Activated T-helper 1 cell treated with anti-CD3 and anti-CD28 coated beads, Interleukin-12 subunit alpha, Interleukin-12 subunit beta, Interleukin-2, Interleukin-4 antibody, amounts not matched to agents 30 ng/mL and 10 ng/mL and 1 ng/mL, durations not matched to agents 14 hours and 24 hours and 36 hours (primary cell): ENCODE measurements at regions of chr17 and their contacts with region 1.

Region 1: GRCh38 chr17:66191593-66192382 is at the start of gene CEP112:
- DNase-seq: peak; percentile 81
- H3K4me3 Mint-ChIP-seq: peak within 1 kb of the TSS; percentile 80
- H3K27ac Mint-ChIP-seq: peak within 1 kb of the TSS; percentile 70
- H3K4me1 Mint-ChIP-seq: peaks cover 15% of the 10 kb centered on the region
- H3K27me3 Mint-ChIP-seq: peaks cover 6% of the 10 kb centered on the region
- total RNA-seq, gene CEP112: 1.3 and 1.7 TPM in 2 replicates

Region 2: DNA sequence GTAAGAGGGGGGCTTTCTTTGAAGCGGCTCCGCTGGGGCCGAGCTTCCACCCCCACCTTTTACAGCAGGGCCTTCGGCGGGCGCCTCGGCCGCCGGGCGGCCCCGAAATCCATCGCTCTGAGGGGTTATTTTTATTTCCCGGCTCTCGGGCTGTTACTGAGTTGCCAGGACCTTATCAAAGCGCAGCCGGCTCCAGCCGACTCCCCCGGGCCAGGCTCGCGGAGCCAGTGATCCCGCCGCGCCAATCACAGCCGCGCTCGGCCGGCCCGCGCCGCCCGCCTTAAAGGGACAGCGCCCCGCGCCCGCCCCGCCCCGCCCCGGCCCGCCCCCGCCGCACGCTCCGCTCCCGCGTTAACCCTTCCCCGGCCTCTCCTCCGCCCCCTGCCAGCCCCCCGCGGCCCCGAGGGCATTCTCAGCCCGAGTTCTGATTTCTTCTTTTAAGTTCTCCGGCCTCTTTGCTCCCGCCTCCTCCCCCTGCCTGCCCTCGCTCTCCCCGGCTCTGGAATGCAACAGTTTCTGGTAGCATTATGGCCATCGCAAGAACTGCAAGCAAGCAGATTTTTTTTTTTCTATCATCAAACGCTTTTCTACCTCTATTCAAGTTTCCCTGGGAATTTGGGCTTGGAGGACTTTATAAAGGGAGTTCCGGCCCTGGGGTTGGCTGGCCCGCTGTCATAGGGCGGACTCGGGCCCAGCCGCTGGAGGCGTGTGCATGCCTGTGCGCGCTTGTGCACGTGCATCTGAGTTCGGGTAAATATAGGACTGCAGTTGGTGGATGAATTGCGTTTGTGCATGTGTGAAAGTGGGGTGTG is 630.2 kb before region 1 on chr17 and contains the start of gene AXIN2:
- intact Hi-C with region 1: loop called (anchors 1 kb)
- DNase-seq: peak; percentile 80
- H3K4me3 Mint-ChIP-seq: peak within 1 kb of the TSS; percentile 86
- H3K27ac Mint-ChIP-seq: peak within 1 kb of the TSS; percentile 52
- H3K4me1 Mint-ChIP-seq: peaks cover 31% of the 10 kb centered on the region
- H3K27me3 Mint-ChIP-seq: peaks cover 21% of the 10 kb centered on the region
- total RNA-seq, gene AXIN2: 4.9 and 5.6 TPM in 2 replicates

Region 3: DNA sequence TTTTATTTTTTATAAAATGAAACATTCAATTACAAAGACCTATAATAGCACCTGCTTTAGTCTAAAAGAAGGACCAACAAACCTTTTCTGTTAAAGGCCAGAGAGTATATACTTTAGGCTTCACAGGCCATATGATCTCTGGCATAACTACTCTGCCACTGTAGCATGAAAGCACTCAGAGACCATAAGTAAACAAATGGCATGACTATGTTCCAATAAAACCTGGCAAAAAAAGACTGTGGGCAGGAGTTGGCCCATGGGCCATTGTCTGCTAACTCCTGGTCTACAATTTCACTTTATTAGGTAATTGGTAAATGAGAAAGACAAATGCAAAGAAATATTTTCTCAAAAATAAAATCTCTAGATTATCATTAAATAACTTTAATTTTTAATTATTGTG is 14.7 kb before region 1 on chr17:
- intact Hi-C with region 1: no loop called
- DNase-seq: no peak
- H3K4me3 Mint-ChIP-seq: no peak overlapping the region
- H3K27ac Mint-ChIP-seq: no peak overlapping the region
- H3K4me1 Mint-ChIP-seq: no peaks in the 10 kb centered on the region
- H3K27me3 Mint-ChIP-seq: peaks cover 7% of the 10 kb centered on the region

Region 4: GRCh38 chr17:66337866-66338485 is 146.2 kb after region 1 on chr17:
- intact Hi-C with region 1: no loop called
- DNase-seq: no peak
- H3K4me3 Mint-ChIP-seq: no peak overlapping the region
- H3K27ac Mint-ChIP-seq: no peak overlapping the region
- H3K4me1 Mint-ChIP-seq: peaks cover 55% of the 10 kb centered on the region
- H3K27me3 Mint-ChIP-seq: no peaks in the 10 kb centered on the region

Region 5: DNA sequence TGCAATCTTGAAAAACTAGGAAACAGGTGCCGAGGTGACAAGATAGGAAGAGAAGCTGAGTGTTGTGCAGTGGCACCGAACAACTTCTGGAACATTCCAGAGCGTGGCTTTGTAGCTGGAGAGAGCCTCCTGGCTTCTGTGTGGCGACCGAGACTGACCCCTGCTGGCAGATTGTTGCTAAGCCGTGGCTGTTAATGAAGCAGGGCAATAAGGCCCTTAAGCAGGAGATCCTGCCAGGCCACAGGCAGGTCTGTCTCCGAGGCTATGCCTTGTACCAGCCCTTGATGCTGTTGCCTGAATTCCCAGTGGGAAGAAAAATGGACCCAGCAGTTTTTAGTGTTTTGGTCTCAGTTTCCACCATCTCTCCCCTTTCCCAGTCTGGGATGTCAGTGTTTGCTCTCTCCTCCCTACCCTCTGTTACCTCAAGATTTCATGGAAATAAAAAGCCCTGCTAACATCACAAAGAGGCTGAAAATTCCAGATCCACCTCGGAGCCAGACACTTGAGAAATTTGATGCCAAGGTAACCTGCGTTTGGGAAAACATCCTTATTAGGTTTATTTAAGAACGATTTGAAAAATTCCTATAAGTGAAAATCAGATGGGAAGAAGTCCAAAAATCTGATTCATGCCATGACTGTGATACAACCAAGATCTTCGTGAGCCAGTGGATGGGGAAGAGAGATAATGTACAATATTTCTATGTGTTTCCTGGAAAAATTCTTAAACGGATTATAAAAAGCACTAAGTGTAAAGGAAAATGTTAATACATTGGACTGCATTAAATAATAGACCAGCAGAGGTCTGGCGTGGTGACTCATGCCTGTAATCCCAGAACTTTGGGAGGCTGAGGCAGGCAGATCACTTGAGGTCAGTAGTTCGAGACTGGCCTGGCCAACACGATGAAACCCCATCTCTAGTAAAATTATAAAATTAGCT is 375.7 kb after region 1 on chr17:
- intact Hi-C with region 1: loop called (anchors 2 kb)
- DNase-seq: peak; percentile 63
- H3K4me3 Mint-ChIP-seq: no peak overlapping the region
- H3K27ac Mint-ChIP-seq: peak overlapping the region; percentile 25
- H3K4me1 Mint-ChIP-seq: peaks cover 37% of the 10 kb centered on the region
- H3K27me3 Mint-ChIP-seq: no peaks in the 10 kb centered on the region

Region 6: GRCh38 chr17:66667491-66668030 is 475.8 kb after region 1 on chr17:
- intact Hi-C with region 1: loop called (anchors 2 kb)
- DNase-seq: peak; percentile 61
- H3K4me3 Mint-ChIP-seq: peak overlapping the region; percentile 67
- H3K27ac Mint-ChIP-seq: peak overlapping the region; percentile 88
- H3K4me1 Mint-ChIP-seq: peaks cover 76% of the 10 kb centered on the region
- H3K27me3 Mint-ChIP-seq: peaks cover 3% of the 10 kb centered on the region

Region 7: DNA sequence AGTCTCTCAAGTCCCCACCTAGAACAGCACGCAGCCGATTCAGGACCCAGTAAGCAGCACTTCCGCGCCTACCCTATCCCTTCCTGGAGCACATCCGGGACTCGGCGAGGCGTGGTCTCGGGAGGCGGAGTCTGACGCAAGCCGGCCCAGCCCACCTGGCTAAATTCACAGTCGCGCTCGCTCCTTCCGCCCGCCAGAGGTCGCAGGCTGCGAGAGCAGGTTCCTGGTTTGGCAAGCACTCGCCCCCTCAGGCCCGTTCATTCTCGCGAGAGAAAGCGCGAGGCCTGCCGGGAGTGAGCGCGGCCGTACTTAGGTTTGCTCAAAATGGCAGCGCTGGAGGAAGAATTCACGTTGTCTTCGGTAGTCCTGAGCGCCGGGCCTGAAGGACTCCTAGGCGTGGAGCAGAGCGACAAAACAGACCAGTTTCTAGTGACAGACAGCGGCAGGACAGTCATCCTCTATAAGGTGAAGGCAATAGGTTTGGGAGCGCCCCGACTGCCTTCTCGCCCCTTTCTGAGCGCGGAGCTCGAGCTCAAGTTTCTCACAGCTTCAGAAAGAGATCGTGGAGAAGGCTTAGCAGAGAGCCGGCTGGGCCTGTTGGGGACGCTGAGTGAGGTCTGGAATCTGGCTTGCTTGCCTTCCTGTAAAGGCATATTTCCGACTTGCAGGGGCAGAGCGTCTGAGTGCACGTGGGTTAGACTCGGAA is 1526.0 kb after region 1 on chr17 and contains the start of gene NOL11:
- intact Hi-C with region 1: loop called (anchors 5 kb)
- DNase-seq: peak; percentile 99
- H3K4me3 Mint-ChIP-seq: peak within 1 kb of the TSS; percentile 99
- H3K27ac Mint-ChIP-seq: peak within 1 kb of the TSS; percentile 99
- H3K4me1 Mint-ChIP-seq: peaks cover 16% of the 10 kb centered on the region
- H3K27me3 Mint-ChIP-seq: peaks cover 4% of the 10 kb centered on the region
- total RNA-seq, gene NOL11: 107 and 118 TPM in 2 replicates